PC-9 (cell line): ENCODE measurements at regions of chr17 and their contacts with region 1.

Region 1: DNA sequence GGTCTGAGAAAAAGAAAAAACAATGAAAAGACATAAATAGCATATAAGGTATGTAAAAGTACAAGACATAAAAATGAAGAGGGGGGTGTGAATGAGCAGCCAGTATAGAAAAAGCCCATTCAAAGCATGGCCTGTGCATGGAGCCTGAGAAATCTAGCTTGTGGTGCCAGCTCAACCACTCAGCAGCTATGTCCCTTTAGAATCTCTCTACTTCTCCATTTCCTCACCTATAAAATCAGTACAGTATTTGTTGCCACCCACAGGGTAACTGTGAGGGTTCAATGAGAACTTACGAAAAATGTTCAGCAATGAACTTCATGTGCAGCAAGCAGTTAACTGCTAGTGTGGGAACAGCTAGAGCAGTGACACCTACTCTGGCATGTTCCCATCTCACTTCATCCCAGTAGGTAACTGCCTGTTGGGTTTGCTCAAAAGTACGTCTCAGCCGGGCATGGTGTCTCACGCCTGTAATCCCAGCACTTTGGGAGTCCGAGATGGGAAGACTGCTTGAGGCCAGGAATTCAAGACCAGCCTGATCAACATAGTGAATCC is 15.3 kb downstream of the CYTH1 start:
- DNase-seq: no peak
- H3K4me3 ChIP-seq: no peak overlapping the region
- H3K27ac ChIP-seq: no peak overlapping the region
- H3K4me1 ChIP-seq: peaks cover 9% of the 10 kb centered on the region; the same call in 1 of the 2 replicates
- H3K27me3 ChIP-seq: no peaks in the 10 kb centered on the region
- CTCF ChIP-seq: no peak

Region 2: DNA sequence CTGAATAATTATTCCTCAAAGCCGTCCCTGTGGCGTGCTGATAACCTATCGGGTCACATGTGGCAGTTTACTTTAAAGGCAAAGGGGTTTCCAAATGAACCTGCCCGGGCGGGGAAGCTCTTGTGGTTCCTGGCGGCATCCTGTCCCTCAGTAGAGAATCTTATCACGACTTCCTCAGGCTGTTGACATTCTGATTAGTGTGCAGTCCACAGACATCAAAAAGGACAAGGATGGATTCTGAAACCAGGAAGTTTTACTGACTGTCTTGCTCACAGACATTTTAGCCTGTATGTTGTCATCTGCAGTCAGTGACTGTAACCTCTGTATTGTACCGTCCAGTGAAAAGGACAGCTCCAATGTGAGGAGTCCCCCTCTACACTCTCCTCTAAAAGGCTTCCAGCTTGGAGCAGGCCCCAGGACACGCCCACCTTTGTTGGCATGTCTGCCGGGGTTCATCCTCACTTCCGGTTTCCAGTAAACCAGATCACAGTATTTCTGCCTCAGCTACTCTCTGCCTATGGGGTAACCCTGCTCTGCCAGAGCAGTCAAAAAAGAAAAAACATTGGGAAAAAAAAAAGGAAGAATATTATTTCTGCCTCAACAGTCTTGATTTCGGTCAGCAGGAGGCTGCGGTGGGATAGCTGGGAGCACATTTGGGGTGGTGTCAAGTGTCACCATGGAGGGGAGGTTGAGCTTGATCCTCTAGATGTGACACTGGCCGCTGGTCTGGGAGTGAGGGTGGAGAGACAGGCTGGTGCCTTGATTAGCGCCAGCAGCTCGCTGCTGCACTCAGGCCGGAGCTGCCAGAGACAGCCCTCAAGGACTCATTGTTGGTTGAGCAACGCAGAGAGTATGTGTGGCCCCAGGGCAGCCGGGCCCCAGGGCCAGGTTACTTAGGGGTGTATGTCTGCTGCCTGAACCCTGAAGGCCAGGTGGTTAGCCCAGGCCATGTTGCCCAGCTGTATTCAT is 100.6 kb before region 1 on chr17:
- CTCF ChIA-PET with region 1: no interaction called
- POLR2A ChIA-PET with region 1: no interaction called
- intact Hi-C with region 1: no loop called
- DNase-seq: peak in 1 of 2 experiments; percentile 71
- H3K4me3 ChIP-seq: no peak overlapping the region
- H3K27ac ChIP-seq: no peak overlapping the region
- H3K4me1 ChIP-seq: peaks cover 9% of the 10 kb centered on the region
- H3K27me3 ChIP-seq: no peaks in the 10 kb centered on the region
- CTCF ChIP-seq: no peak

Region 3: DNA sequence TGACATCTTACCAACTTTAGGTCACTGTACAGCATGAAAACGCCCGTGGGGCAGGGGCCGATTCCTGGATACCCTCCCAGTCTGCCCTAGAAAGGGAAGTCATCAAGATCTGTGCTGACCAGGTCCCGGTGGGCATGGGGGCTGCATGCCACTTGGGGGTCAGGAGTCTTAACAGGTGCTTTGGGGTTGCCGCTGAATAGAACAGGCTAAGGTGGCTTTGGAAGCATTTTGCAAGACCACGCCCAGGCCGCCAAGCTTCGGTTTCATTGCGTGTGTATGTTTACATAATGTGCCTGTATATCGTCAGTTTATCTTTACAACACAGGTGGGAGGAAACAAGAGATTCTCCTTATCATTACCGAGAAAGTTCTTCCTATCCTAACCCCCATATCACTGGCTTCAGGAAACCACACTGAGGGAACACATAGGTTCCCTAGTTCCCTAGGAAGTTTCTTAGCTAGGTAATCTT is 87.1 kb after region 1 on chr17:
- CTCF ChIA-PET with region 1: interaction called, 19 read pairs
- POLR2A ChIA-PET with region 1: no interaction called
- intact Hi-C with region 1: no loop called
- DNase-seq: no peak
- H3K4me3 ChIP-seq: no peak overlapping the region
- H3K27ac ChIP-seq: no peak overlapping the region
- H3K4me1 ChIP-seq: no peaks in the 10 kb centered on the region
- H3K27me3 ChIP-seq: no peaks in the 10 kb centered on the region
- CTCF ChIP-seq: no peak